ENCODE measurements at regions of chr14 and their contacts with region 1.

Region 1: DNA sequence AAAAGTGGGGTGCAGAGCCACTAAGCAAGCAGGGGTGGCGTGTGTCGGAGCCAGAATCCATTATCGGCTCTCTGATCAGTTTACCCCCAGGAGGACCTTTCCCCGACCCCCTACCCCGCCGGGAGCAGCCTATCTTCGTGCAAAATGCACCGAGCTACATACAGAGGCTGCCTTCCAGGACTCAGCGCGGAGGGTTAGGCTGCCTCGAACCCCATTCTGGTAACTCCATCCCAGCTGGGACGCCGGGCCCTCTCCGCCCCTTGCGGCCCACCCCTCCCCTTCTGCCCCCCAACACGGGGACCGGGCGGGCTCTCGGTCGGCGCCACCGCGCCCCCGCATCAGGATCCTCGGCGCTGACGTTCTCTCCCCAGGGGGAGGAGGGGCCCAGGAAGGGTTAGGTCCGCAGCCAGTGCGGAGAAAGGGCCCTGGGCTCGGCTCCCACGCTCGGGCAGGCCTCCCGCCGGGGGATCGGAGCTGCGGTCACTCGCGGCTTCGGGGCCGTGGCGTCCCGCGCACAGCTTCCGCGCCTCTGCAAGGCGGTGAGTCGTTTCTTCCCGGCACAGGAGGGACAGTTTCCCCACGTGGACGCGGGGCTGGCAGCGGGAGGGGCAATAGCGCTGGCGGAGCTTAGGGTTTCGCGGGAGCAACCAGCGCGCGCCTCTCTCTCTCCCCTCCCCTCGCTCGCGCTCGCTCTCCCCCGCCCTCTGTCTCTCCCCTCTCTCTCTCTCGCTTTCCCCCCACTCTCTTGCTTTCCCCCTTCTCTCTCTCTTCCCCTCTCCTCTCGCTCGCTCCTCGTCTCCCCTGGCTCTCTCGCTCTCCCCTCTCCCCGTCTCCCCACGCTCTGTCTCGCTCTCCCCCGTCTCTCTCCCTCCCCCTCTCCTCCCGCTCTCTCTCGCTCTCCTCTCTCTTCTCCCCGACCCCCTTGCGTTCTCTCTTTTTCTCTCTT is 12.5 kb upstream of the MAP3K9 start:
- DNase-seq: peak; percentile 62
- H3K4me3 ChIP-seq: peak overlapping the region; percentile 69 to 76 (median 69)
- H3K27ac ChIP-seq: no peak overlapping the region
- H3K4me1 ChIP-seq: peaks cover 19% of the 10 kb centered on the region
- H3K27me3 ChIP-seq: no peaks in the 10 kb centered on the region
- CTCF ChIP-seq: no peak

Region 2: GRCh38 chr14:70254476-70254961 is 567.3 kb before region 1 on chr14:
- CTCF ChIA-PET with region 1: no interaction called
- dilution Hi-C with region 1: no loop called
- in situ Hi-C with region 1: no loop called
- intact Hi-C with region 1: no loop called
- DNase-seq: peak; percentile 63
- H3K4me3 ChIP-seq: peak overlapping the region in 2 of 3 experiments; percentile 50 to 55
- H3K27ac ChIP-seq: no peak overlapping the region
- H3K4me1 ChIP-seq: peaks cover 3% of the 10 kb centered on the region
- H3K27me3 ChIP-seq: no peaks in the 10 kb centered on the region
- CTCF ChIP-seq: no peak

Region 3: GRCh38 chr14:70622111-70622712 is 199.6 kb before region 1 on chr14:
- CTCF ChIA-PET with region 1: no interaction called
- dilution Hi-C with region 1: no loop called
- in situ Hi-C with region 1: loop called (anchors 10 kb)
- intact Hi-C with region 1: loop called (anchors 1 kb)
- DNase-seq: peak; percentile 52
- H3K4me3 ChIP-seq: no peak overlapping the region
- H3K27ac ChIP-seq: no peak overlapping the region
- H3K4me1 ChIP-seq: peaks cover 7% of the 10 kb centered on the region
- H3K27me3 ChIP-seq: no peaks in the 10 kb centered on the region
- CTCF ChIP-seq: peak; percentile 92 to 95

Region 4: DNA sequence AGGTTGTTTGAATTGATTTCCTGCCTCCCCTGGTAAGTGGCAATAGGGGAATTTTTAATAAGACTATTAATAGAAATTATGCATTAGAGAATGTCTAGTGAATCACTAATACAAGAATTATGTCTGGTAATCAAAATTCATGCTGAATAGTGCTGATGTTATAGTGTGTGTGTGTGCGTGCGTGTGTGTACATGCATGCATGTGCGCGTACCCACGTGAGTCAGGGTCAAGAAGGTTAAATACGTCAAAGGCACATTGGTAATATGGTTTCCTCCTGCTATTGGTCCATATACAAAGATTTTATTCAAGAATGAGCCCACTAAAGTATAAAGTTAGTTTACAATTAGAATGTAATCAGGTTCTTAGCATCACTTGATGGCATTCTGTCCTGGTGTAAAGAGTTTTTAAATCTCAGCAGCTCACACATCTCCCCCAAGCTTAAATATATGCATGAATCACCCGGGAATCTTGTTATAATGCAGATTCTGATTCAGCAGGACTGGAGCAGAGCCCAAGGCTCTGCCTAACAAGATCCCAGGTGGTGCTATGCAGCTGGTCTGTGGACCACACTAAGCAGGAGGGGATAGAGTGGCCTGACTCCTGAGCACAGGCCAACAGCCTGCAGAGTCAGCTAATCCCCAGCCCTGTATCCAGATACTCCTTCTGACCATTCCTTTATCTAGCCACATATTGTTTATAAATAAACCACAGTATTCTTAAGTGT is 136.2 kb before region 1 on chr14:
- CTCF ChIA-PET with region 1: no interaction called
- dilution Hi-C with region 1: no loop called
- in situ Hi-C with region 1: no loop called
- intact Hi-C with region 1: no loop called
- DNase-seq: no peak
- H3K4me3 ChIP-seq: no peak overlapping the region
- H3K27ac ChIP-seq: no peak overlapping the region
- H3K4me1 ChIP-seq: no peaks in the 10 kb centered on the region
- H3K27me3 ChIP-seq: no peaks in the 10 kb centered on the region
- CTCF ChIP-seq: no peak

Region 5: GRCh38 chr14:70955543-70956480 is 134.0 kb after region 1 on chr14:
- CTCF ChIA-PET with region 1: interaction called, 3 read pairs
- dilution Hi-C with region 1: no loop called
- in situ Hi-C with region 1: no loop called
- intact Hi-C with region 1: loop called (anchors 1 kb)
- DNase-seq: no peak
- H3K4me3 ChIP-seq: no peak overlapping the region
- H3K27ac ChIP-seq: no peak overlapping the region
- H3K4me1 ChIP-seq: no peaks in the 10 kb centered on the region
- H3K27me3 ChIP-seq: no peaks in the 10 kb centered on the region
- CTCF ChIP-seq: peak; percentile 57 to 66

Region 6: GRCh38 chr14:70972107-70972976 is 150.5 kb after region 1 on chr14:
- CTCF ChIA-PET with region 1: no interaction called
- dilution Hi-C with region 1: no loop called
- in situ Hi-C with region 1: loop called in 1 of 2 experiments (anchors 5 kb)
- intact Hi-C with region 1: loop called (anchors 1 kb)
- DNase-seq: peak; percentile 70
- H3K4me3 ChIP-seq: no peak overlapping the region
- H3K27ac ChIP-seq: no peak overlapping the region
- H3K4me1 ChIP-seq: no peaks in the 10 kb centered on the region
- H3K27me3 ChIP-seq: no peaks in the 10 kb centered on the region
- CTCF ChIP-seq: peak; percentile 85 to 92

Region 7: GRCh38 chr14:71753126-71753830 is 931.4 kb after region 1 on chr14:
- CTCF ChIA-PET with region 1: no interaction called
- dilution Hi-C with region 1: no loop called
- in situ Hi-C with region 1: no loop called
- intact Hi-C with region 1: loop called (anchors 5 kb)
- DNase-seq: peak; percentile 68
- H3K4me3 ChIP-seq: no peak overlapping the region
- H3K27ac ChIP-seq: no peak overlapping the region
- H3K4me1 ChIP-seq: peaks cover 11% of the 10 kb centered on the region
- H3K27me3 ChIP-seq: no peaks in the 10 kb centered on the region
- CTCF ChIP-seq: peak; percentile 82 to 96